HepG2 (cell line): ENCODE measurements at regions of chr3 and their contacts with region 1.

Region 1: GRCh38 chr3:163043074-163043473 is 1546.5 kb downstream of the OTOL1 start:
- DNase-seq: peak; percentile 25
- ATAC-seq: peak; percentile 67
- H3K4me3 ChIP-seq: no peak overlapping the region
- H3K27ac ChIP-seq: no peak overlapping the region
- H3K4me1 ChIP-seq: no peaks in the 10 kb centered on the region
- H3K27me3 ChIP-seq: no peaks in the 10 kb centered on the region; a peak in 1 of 5 replicates
- CTCF ChIP-seq: no peak; the same call in 1 of the 2 replicates
- EP300 ChIP-seq: no peak
- POLR2A ChIP-seq: no peak
- RAD21 ChIP-seq: no peak

Region 2: GRCh38 chr3:161559177-161559998 is 1483.7 kb before region 1 on chr3:
- CTCF ChIA-PET with region 1: no interaction called
- POLR2A ChIA-PET with region 1: no interaction called
- in situ Hi-C with region 1: no loop called
- intact Hi-C with region 1: loop called (anchors 2 kb)
- DNase-seq: peak; percentile 27
- ATAC-seq: peak; percentile 55; the same call in 2 of the 3 replicates
- H3K4me3 ChIP-seq: no peak overlapping the region
- H3K27ac ChIP-seq: no peak overlapping the region
- H3K4me1 ChIP-seq: no peaks in the 10 kb centered on the region
- H3K27me3 ChIP-seq: no peaks in the 10 kb centered on the region
- CTCF ChIP-seq: peak; percentile 66
- EP300 ChIP-seq: no peak
- POLR2A ChIP-seq: no peak
- RAD21 ChIP-seq: 0 out of 2 replicates have a peak, but pooled peaks have one; percentile 19

Region 3: DNA sequence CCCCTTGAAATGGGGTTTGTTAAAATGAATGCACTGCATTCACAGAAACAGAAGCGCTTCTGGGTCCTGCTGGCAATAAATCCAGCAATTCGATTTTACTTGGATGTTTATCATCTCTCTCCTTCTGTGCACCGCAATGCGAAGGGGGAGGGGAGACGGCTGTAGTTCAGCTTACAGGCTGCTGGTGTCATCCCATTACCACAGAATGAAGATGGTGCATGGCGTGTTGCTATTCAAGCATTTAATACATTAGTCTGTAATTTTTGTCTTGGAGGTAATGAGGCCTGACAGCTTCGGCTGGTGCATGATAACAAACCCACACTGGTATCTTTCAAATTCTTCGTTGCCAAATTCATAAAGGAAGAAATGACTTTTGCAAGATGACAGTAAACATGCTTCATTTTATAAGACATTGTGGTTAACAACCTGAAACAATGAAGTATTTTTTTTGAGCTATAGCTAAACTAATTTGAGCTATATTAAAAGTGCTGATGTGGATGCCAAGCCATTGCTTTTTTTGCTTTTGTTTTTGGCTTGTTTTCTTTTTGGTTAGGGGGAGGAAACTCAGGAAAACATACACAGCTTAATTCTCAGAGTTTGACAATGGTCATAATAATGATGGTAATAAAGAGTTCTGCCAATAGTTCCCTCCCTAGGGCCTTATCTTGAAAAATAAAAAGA is 1128.2 kb before region 1 on chr3:
- CTCF ChIA-PET with region 1: no interaction called
- POLR2A ChIA-PET with region 1: no interaction called
- in situ Hi-C with region 1: no loop called
- intact Hi-C with region 1: loop called (anchors 10 kb)
- DNase-seq: peak; percentile 44
- ATAC-seq: peak; percentile 94
- H3K4me3 ChIP-seq: peak overlapping the region in 1 of 3 experiments; percentile 1; a peak in 1 of 6 replicates
- H3K27ac ChIP-seq: no peak overlapping the region
- H3K4me1 ChIP-seq: peaks cover 25% of the 10 kb centered on the region
- H3K27me3 ChIP-seq: no peaks in the 10 kb centered on the region
- CTCF ChIP-seq: peak; percentile 79
- EP300 ChIP-seq: no peak; a peak in 1 of 4 replicates
- POLR2A ChIP-seq: no peak
- RAD21 ChIP-seq: no peak

Region 4: GRCh38 chr3:162317046-162317445 is 726.0 kb before region 1 on chr3:
- CTCF ChIA-PET with region 1: no interaction called
- POLR2A ChIA-PET with region 1: no interaction called
- in situ Hi-C with region 1: no loop called
- intact Hi-C with region 1: no loop called
- DNase-seq: no peak
- ATAC-seq: no peak
- H3K4me3 ChIP-seq: no peak overlapping the region
- H3K27ac ChIP-seq: no peak overlapping the region
- H3K4me1 ChIP-seq: no peaks in the 10 kb centered on the region
- H3K27me3 ChIP-seq: no peaks in the 10 kb centered on the region
- CTCF ChIP-seq: no peak
- EP300 ChIP-seq: no peak
- POLR2A ChIP-seq: no peak
- RAD21 ChIP-seq: no peak

Region 5: GRCh38 chr3:163018664-163019063 is 24.4 kb before region 1 on chr3:
- CTCF ChIA-PET with region 1: no interaction called
- POLR2A ChIA-PET with region 1: no interaction called
- in situ Hi-C with region 1: no loop called
- intact Hi-C with region 1: no loop called
- DNase-seq: no peak
- ATAC-seq: no peak
- H3K4me3 ChIP-seq: no peak overlapping the region
- H3K27ac ChIP-seq: no peak overlapping the region
- H3K4me1 ChIP-seq: no peaks in the 10 kb centered on the region
- H3K27me3 ChIP-seq: no peaks in the 10 kb centered on the region; a peak in 1 of 5 replicates
- CTCF ChIP-seq: no peak
- EP300 ChIP-seq: no peak
- POLR2A ChIP-seq: no peak
- RAD21 ChIP-seq: no peak

Region 6: GRCh38 chr3:163196815-163197374 is 153.8 kb after region 1 on chr3:
- CTCF ChIA-PET with region 1: no interaction called
- POLR2A ChIA-PET with region 1: no interaction called
- in situ Hi-C with region 1: no loop called
- intact Hi-C with region 1: no loop called
- DNase-seq: no peak
- ATAC-seq: no peak
- H3K4me3 ChIP-seq: no peak overlapping the region
- H3K27ac ChIP-seq: no peak overlapping the region
- H3K4me1 ChIP-seq: no peaks in the 10 kb centered on the region
- H3K27me3 ChIP-seq: no peaks in the 10 kb centered on the region; a peak in 1 of 5 replicates
- CTCF ChIP-seq: no peak
- EP300 ChIP-seq: no peak
- POLR2A ChIP-seq: no peak
- RAD21 ChIP-seq: no peak